ENCODE measurements at regions of chr17 and their contacts with region 1.

Region 1: DNA sequence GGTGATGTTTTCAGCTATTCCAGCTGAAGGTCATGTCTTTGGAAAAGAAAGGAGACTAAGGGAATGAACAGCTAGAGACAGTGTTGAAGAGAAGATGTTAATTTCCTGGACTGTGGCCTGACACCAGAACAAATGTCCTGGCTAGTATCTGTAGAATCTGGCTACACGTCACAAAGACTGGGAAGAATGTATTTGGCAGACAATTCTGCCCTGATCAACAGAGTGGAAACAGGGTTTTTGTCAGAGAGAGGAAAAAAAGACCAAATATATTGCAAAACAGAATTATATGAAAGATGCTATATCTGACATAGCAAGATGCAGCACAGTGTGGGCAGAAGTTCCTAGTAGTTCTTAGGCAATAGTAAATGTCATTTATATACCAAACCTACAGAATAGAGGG is 17.0 kb upstream of the ANKFN1 start:
- DNase-seq: no peak
- H3K4me3 ChIP-seq: no peak overlapping the region
- H3K27ac ChIP-seq: no peak overlapping the region
- H3K4me1 ChIP-seq: peaks cover 11% of the 10 kb centered on the region
- H3K27me3 ChIP-seq: no peaks in the 10 kb centered on the region

Region 2: DNA sequence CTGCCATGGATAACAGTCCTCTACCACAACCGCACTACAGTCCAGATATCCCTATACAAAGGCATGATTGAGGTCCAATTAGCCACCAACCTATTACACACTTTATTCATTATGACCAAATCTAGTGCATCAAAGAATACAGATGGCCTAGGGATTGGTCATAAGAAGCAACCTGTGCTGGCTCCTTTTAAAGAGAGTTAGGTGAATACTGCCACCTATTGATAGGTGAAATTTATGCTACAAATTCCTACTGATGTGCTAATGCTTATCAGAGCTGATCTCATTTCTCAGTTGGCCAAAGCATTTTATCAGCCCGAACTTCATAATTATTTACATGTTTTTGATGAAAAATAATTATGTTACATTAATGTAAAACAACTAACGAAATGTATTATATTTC is 183.2 kb after region 1 on chr17:
- in situ Hi-C with region 1: loop called (anchors 10 kb)
- DNase-seq: peak; percentile 75
- H3K4me3 ChIP-seq: no peak overlapping the region
- H3K27ac ChIP-seq: no peak overlapping the region
- H3K4me1 ChIP-seq: peaks cover 18% of the 10 kb centered on the region; the same call in 1 of the 2 replicates
- H3K27me3 ChIP-seq: no peaks in the 10 kb centered on the region

Measured in GM23248 (cell line).